Adrenal gland (tissue), 19 donors: ENCODE measurements at regions of chr9 and their contacts with region 1.

Region 1: DNA sequence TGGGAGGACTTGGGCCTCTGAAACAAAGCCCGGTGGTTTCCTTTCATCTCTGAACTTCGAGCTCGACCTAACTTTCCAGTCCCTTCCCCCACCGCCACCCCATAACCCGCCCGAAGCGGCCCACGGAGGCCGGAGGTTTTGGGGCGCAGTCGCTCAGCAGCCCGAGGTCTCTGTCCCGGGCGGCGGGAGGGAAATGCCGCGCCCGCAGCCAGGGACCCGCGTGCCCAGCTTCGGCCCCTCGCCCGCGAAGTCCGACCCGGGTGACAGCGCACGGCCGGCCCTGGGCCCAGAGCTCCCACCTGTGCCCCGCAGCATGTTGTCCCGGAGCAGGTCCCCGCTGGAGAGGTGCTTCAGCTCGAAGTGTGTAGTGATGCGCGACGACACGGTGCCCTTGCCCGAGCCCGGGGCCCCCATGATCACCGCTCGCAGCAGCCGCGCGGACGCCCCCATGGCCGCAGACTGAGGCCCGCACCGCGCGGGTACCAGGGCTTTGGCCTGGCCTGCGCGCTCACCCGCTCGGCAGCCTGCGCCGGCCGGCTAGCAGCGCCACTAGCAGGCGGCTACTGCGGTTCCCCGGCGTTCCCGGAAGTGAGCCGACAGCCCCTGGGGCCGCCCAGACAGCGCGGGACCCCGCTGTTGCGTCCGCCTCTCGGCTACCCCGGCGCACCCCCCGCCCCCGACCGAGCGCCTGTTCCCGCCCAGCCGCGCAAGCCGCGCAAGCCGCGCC is at the start of gene AK3:
- DNase-seq: peak; percentile 86 to 92 (median 90)
- H3K4me3 ChIP-seq: peak within 1 kb of the TSS; percentile 54 to 95 (median 70)
- H3K27ac ChIP-seq: peak within 1 kb of the TSS; percentile 80 to 97 (median 90)
- H3K4me1 ChIP-seq: peaks cover 25 to 29% of the 10 kb centered on the region in 2 donors
- H3K27me3 ChIP-seq: no peaks in the 10 kb centered on the region
- CTCF ChIP-seq: peak in 3 of 6 experiments; percentile 14 to 32 (median 25)
- POLR2A ChIP-seq: peak; percentile 90 to 91
- total RNA-seq, gene AK3: 86.2 to 237 (median 116) TPM

Region 2: GRCh38 chr9:4382722-4383317 is 358.0 kb before region 1 on chr9:
- intact Hi-C with region 1: loop called in 1 of 2 experiments (anchors 5 kb)
- DNase-seq: peak in 1 of 7 donors; percentile 7
- H3K4me3 ChIP-seq: no peak overlapping the region
- H3K27ac ChIP-seq: no peak overlapping the region
- H3K4me1 ChIP-seq: no peaks in the 10 kb centered on the region
- H3K27me3 ChIP-seq: no peaks in the 10 kb centered on the region
- CTCF ChIP-seq: peak; percentile 17 to 62 (median 60)
- POLR2A ChIP-seq: no peak

Region 3: DNA sequence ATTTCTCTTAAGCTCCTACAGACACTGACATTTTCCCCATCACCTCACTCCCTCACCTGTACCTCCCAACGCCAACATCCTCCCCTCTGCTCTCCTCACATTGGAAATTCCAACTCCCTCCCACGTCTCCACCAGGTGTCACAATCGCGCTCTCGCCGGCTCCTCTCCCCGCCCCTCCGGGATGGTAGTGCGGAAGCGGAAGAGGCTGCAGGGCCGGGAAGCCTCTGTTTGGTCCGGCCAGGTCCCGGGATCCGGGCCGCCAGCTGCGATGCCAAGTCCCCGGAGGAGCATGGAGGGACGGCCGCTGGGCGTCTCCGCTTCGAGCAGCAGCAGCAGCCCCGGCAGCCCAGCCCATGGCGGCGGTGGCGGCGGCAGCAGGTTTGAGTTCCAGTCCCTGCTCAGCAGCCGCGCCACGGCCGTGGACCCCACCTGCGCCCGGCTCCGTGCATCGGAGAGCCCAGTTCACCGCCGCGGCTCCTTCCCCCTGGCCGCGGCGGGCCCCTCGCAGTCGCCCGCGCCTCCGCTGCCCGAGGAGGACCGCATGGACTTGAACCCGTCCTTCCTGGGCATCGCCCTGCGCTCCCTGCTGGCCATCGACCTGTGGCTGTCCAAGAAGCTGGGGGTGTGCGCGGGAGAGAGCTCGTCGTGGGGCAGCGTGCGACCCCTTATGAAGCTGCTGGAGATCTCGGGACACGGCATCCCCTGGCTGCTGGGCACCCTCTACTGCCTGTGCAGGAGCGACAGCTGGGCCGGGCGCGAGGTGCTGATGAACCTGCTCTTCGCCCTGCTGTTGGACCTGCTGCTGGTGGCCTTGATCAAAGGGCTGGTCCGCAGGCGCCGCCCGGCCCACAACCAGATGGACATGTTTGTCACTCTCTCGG is 78.5 kb before region 1 on chr9 and contains the start of gene PLPP6:
- intact Hi-C with region 1: loop called in 1 of 2 experiments (anchors 5 kb)
- DNase-seq: peak; percentile 87 to 94 (median 90)
- H3K4me3 ChIP-seq: peak within 1 kb of the TSS; percentile 5 to 72 (median 55)
- H3K27ac ChIP-seq: peak within 1 kb of the TSS in 4 of 5 donors; percentile 55 to 87 (median 72)
- H3K4me1 ChIP-seq: peaks cover 10 to 24% of the 10 kb centered on the region in 2 donors
- H3K27me3 ChIP-seq: no peaks in the 10 kb centered on the region
- CTCF ChIP-seq: peak in 5 of 6 experiments; percentile 36 to 65 (median 53)
- POLR2A ChIP-seq: peak in 1 of 2 donors; percentile 61
- total RNA-seq, gene PLPP6: 7.9 to 17.1 (median 11.4) TPM

Region 4: GRCh38 chr9:4946937-4947336 is 206.1 kb after region 1 on chr9:
- intact Hi-C with region 1: no loop called
- DNase-seq: no peak
- H3K4me3 ChIP-seq: no peak overlapping the region
- H3K27ac ChIP-seq: no peak overlapping the region
- H3K4me1 ChIP-seq: no peaks in the 10 kb centered on the region
- H3K27me3 ChIP-seq: no peaks in the 10 kb centered on the region
- CTCF ChIP-seq: no peak
- POLR2A ChIP-seq: no peak

Region 5: GRCh38 chr9:4984621-4985385 is 244.0 kb after region 1 on chr9 and contains the start of gene JAK2:
- intact Hi-C with region 1: no loop called
- DNase-seq: peak; percentile 88 to 96 (median 92)
- H3K4me3 ChIP-seq: peak within 1 kb of the TSS in 3 of 4 donors; percentile 43 to 87 (median 74)
- H3K27ac ChIP-seq: peak within 1 kb of the TSS; percentile 88 to 98 (median 97)
- H3K4me1 ChIP-seq: peaks cover 21 to 43% of the 10 kb centered on the region in 2 donors
- H3K27me3 ChIP-seq: no peaks in the 10 kb centered on the region
- CTCF ChIP-seq: peak in 4 of 6 experiments; percentile 20 to 37 (median 28)
- POLR2A ChIP-seq: peak; percentile 60 to 95
- total RNA-seq, gene JAK2: 6.9 to 21.0 (median 13.5) TPM

Region 6: GRCh38 chr9:5529683-5530221 is 789.0 kb after region 1 on chr9:
- intact Hi-C with region 1: no loop called
- DNase-seq: no peak
- H3K4me3 ChIP-seq: no peak overlapping the region
- H3K27ac ChIP-seq: no peak overlapping the region
- H3K4me1 ChIP-seq: no peaks in the 10 kb centered on the region
- H3K27me3 ChIP-seq: no peaks in the 10 kb centered on the region
- CTCF ChIP-seq: no peak
- POLR2A ChIP-seq: no peak